AG04450 (cell line): ENCODE measurements at regions of chr12 and their contacts with region 1.

Region 1: DNA sequence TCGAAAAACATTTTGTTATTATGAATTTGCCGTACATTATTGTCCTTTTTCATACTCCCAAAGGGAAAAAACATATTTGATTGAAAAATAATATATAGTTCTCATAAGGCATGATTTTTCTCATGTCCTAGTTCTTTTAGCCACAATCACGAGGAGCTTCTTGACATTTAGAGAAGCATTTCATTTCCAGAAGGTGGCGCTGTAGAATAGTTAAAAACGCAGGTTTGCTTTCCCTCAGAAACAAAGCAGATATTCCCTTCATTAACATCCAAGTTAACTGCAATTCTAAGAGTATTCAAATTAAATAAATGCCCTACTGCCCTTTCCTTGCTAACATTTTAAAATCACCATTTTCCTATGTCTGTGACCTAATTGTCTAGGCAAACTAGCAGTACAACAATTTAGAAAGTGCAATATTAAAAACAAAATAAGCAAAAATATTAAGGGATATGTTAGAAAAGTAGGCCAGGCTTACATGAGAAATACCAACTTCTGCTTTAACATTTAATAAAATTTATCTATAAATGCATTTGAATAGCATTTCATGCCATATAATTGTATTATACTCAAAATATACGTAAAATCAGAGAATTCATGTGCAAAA is 10.9 kb upstream of the PIK3C2G start:
- DNase-seq: peak; percentile 37
- H3K4me3 ChIP-seq: no peak overlapping the region
- H3K27ac ChIP-seq: no peak overlapping the region
- H3K27me3 ChIP-seq: no peaks in the 10 kb centered on the region
- CTCF ChIP-seq: peak; percentile 71

Region 2: DNA sequence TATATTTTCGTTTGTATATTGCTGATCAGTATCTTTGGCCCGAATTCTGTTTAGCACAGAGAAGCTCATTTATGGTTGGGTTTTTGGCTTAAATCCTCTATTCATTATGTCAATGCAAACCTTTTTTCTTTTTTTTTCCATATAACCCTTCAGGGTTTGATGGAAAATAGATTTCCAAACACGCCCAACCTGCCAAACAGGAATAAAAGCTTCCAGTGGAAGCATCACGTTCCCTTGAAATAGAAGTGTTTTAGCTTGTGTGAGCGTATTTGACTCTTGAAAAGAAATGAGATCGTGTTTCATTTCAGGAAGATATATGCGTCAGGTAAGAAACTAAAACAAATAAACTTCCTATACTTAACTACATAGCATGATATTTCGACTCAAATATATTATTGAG is 10.8 kb after region 1 on chr12 and contains the start of gene PIK3C2G:
- CTCF ChIA-PET with region 1: interaction called, 25 read pairs
- POLR2A ChIA-PET with region 1: no interaction called
- DNase-seq: no peak
- H3K4me3 ChIP-seq: no peak within 1 kb of the TSS
- H3K27ac ChIP-seq: no peak within 1 kb of the TSS
- H3K27me3 ChIP-seq: no peaks in the 10 kb centered on the region
- CTCF ChIP-seq: no peak
- polyA plus RNA-seq, gene PIK3C2G: not detected in 2 replicates

Region 3: GRCh38 chr12:18320036-18320617 is 69.7 kb after region 1 on chr12:
- CTCF ChIA-PET with region 1: interaction called, 40 read pairs
- POLR2A ChIA-PET with region 1: no interaction called
- DNase-seq: peak; percentile 59
- H3K4me3 ChIP-seq: no peak overlapping the region
- H3K27ac ChIP-seq: no peak overlapping the region
- H3K27me3 ChIP-seq: no peaks in the 10 kb centered on the region
- CTCF ChIP-seq: peak; percentile 53